Caco-2 (cell line): ENCODE measurements at regions of chr15 and their contacts with region 1.

Region 1: GRCh38 chr15:82849556-82850512 is 40.4 kb downstream of the WHAMM start:
- DNase-seq: peak; percentile 62 to 67
- H3K4me3 ChIP-seq: no peak overlapping the region
- H3K4me3 Mint-ChIP-seq: no peak overlapping the region
- H3K27ac Mint-ChIP-seq: no peak overlapping the region
- H3K4me1 ChIP-seq: no peaks in the 10 kb centered on the region
- H3K4me1 Mint-ChIP-seq: no peaks in the 10 kb centered on the region
- H3K27me3 ChIP-seq: no peaks in the 10 kb centered on the region
- H3K27me3 Mint-ChIP-seq: peaks cover 3% of the 10 kb centered on the region
- CTCF ChIP-seq: peak; percentile 63 to 66

Region 2: DNA sequence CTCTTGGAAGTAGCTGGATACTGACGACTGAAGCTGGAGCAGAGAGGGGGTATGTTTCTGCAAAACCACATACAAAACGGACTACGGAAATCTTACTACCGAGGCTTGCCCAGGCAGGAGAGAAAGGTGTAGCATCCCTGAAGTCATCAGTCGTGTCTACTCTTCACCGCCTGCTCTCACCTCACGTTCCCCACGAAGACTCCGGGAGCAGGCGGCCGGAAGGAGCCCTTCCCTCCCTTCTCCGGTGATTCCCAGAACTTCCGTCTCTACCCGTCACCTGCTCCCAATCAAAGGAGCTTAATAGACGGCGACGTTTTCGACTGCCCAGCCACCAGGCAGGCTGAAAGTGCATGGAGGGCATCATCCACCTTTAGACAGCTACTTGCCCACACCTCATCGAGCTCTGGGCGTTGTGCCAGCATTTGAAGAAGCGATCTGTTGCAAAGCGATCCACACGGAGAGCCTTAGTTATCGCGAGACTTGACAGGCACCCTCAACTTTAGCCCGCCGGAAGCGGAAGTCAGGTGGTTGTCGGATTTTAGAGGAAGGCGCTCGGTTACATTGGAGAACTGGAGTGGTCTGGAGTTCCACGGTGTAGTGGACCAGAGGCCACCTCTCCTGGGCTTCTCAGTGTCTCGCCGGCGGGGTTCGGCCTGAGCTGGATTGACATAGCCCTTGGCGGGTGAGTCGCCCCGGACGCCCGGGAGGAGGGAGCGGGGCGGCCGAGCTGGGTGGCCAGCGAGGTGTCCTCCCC is 136.0 kb after region 1 on chr15 and contains the start of gene RAMAC:
- CTCF ChIA-PET with region 1: no interaction called
- POLR2A ChIA-PET with region 1: no interaction called
- intact Hi-C with region 1: loop called (anchors 5 kb)
- DNase-seq: peak; percentile 88 to 91
- H3K4me3 ChIP-seq: peak within 1 kb of the TSS; percentile 99
- H3K4me3 Mint-ChIP-seq: peak within 1 kb of the TSS; percentile 86
- H3K27ac Mint-ChIP-seq: peak within 1 kb of the TSS; percentile 88
- H3K4me1 ChIP-seq: peaks cover 5% of the 10 kb centered on the region
- H3K4me1 Mint-ChIP-seq: no peaks in the 10 kb centered on the region
- H3K27me3 ChIP-seq: no peaks in the 10 kb centered on the region
- H3K27me3 Mint-ChIP-seq: no peaks in the 10 kb centered on the region
- CTCF ChIP-seq: no peak
- total RNA-seq, gene RAMAC: 31.8 and 33.3 TPM in 2 replicates

Region 3: DNA sequence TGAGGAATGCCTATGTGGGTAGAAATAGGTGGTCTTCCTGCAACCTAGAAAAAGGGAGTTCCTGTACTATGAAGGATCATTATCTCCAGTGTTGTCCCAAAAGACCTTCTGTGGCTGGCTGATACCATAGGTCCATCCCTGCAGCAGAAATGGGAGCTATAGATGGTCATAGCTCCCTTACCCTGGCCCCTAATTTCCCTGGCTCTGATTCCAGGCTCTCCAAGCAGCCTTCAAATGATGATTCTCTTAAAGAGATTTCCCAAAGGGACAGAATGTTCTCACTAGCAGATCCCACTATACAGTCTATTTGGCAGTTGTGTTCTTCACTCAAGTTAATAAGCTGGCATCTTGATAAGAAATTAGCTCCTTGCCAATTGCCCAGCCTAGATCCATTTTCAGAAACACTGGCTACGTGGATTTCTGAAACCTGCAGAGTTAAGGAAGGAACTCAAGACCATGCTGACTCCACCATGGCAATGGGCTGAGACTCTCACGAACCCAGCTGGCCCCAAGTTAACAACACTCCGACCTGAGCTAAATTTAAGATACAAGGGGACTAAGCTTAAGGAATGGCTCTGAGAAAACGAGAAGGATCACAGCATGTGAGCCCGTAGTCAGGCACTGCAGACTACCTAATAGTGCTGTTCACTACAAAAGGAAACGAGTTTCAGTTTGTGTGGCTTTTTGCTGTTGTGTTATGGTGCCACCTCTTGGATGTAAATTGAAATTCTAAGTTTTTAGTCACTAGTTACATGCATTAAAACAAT is 150.3 kb after region 1 on chr15:
- CTCF ChIA-PET with region 1: no interaction called
- POLR2A ChIA-PET with region 1: no interaction called
- intact Hi-C with region 1: loop called (anchors 1 kb)
- DNase-seq: peak in 1 of 2 experiments; percentile 19
- H3K4me3 ChIP-seq: no peak overlapping the region
- H3K4me3 Mint-ChIP-seq: no peak overlapping the region
- H3K27ac Mint-ChIP-seq: no peak overlapping the region
- H3K4me1 ChIP-seq: no peaks in the 10 kb centered on the region
- H3K4me1 Mint-ChIP-seq: no peaks in the 10 kb centered on the region
- H3K27me3 ChIP-seq: no peaks in the 10 kb centered on the region
- H3K27me3 Mint-ChIP-seq: no peaks in the 10 kb centered on the region
- CTCF ChIP-seq: peak; percentile 10 to 15